ENCODE measurements at regions of chr15 and their contacts with region 1.

Region 1: DNA sequence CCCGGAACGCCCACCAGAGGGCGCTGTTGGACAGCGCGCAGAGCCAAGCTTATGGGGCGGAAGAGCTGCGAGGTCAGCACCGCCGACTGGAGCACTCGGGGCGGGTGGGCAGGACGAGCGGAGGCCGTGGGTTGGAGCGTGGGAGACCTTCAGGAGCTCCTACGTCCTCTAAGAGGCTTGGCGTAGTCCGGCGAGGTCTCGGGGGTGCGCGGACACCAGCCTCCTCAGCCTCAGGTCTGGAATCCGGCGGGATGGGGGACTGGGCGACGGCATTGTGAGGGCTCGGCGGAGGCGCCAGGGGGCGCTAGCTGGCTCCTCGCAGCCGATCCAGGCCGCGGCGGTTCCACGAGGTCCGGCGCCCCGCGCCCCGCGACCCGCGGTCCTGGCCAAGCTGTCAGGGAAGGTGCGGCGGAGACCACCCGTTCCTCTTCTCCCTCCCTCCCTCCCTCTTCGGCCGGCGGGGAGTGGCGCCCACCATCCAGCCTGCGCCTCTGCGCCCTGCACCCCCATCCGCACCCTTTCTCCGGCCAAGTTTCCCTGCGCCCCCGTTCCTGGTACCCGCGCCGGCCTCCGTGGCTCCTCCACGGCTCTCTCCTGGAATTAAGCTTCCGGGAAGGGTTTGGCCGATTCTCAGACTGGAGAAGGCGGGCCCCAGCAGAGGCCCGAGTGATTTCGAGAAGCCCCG is 24.3 kb upstream of the POLG start:
- H3K4me3 ChIP-seq: peak overlapping the region; percentile 55
- H3K27ac ChIP-seq: no peak overlapping the region
- H3K4me1 ChIP-seq: peaks cover 4% of the 10 kb centered on the region; the same call in 1 of the 2 replicates
- CTCF ChIP-seq: peak; percentile 99

Region 2: DNA sequence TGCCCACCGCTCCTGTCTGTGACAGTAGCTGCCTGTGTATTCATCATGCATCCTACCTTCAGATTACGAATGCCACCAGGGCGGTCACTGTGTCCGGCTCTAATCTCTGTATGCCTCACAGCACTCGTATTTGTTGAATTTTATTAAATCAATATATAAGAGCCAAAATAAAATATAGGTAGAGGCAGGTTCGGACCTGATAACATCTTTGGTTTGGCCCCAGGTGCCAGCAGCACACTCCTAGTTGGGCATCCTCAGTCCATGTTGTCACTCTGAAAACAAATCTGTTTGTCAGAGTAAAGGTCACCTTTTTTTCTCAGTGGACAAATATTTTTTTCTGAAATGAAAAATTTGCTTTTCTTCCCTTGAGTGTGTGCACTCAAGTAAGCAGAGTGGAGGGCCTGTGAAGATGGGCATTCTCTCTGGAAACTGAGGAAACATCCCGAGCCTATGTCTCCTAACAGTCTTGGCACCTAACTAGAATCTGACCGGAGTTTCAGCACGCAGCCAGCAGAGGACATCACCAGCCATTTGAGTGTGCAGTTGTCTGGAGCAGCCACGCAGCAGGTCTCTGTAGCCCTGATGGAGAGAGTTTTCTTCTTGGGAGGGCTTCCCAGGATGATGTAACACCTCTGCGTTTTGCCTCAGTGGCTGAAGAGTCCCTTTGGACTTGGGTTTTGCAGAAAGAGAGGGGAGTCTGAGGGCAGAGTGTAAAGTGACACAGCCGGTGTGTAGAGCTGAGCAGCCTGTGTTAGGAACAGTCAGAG is 219.3 kb before region 1 on chr15:
- CTCF ChIA-PET with region 1: no interaction called
- POLR2A ChIA-PET with region 1: no interaction called
- H3K4me3 ChIP-seq: no peak overlapping the region
- H3K27ac ChIP-seq: peak overlapping the region; percentile 53; the same call in 1 of the 2 replicates
- H3K4me1 ChIP-seq: peaks cover 17% of the 10 kb centered on the region
- CTCF ChIP-seq: peak; percentile 64

Region 3: GRCh38 chr15:89187976-89188514 is 170.9 kb before region 1 on chr15:
- CTCF ChIA-PET with region 1: no interaction called
- POLR2A ChIA-PET with region 1: no interaction called
- H3K4me3 ChIP-seq: no peak overlapping the region
- H3K27ac ChIP-seq: no peak overlapping the region
- H3K4me1 ChIP-seq: no peaks in the 10 kb centered on the region
- CTCF ChIP-seq: no peak

Region 4: GRCh38 chr15:89321521-89322410 is 37.1 kb before region 1 on chr15:
- CTCF ChIA-PET with region 1: interaction called, 12 read pairs
- POLR2A ChIA-PET with region 1: no interaction called
- H3K4me3 ChIP-seq: no peak overlapping the region
- H3K27ac ChIP-seq: no peak overlapping the region
- H3K4me1 ChIP-seq: no peaks in the 10 kb centered on the region
- CTCF ChIP-seq: 0 out of 2 replicates have a peak, but pooled peaks have one; percentile 9

Region 5: GRCh38 chr15:89383365-89384175 is 24.7 kb after region 1 on chr15:
- CTCF ChIA-PET with region 1: interaction called, 237 read pairs
- POLR2A ChIA-PET with region 1: interaction called, 4 read pairs
- H3K4me3 ChIP-seq: no peak overlapping the region
- H3K27ac ChIP-seq: peak overlapping the region; percentile 76
- H3K4me1 ChIP-seq: peaks cover 23% of the 10 kb centered on the region
- CTCF ChIP-seq: no peak

Region 6: GRCh38 chr15:89436570-89437316 is 77.8 kb after region 1 on chr15:
- CTCF ChIA-PET with region 1: interaction called, 189 read pairs
- POLR2A ChIA-PET with region 1: no interaction called
- H3K4me3 ChIP-seq: no peak overlapping the region
- H3K27ac ChIP-seq: no peak overlapping the region
- H3K4me1 ChIP-seq: no peaks in the 10 kb centered on the region
- CTCF ChIP-seq: no peak

Region 7: GRCh38 chr15:89462331-89462912 is 103.5 kb after region 1 on chr15:
- CTCF ChIA-PET with region 1: interaction called, 44 read pairs
- POLR2A ChIA-PET with region 1: no interaction called
- H3K4me3 ChIP-seq: no peak overlapping the region
- H3K27ac ChIP-seq: no peak overlapping the region
- H3K4me1 ChIP-seq: no peaks in the 10 kb centered on the region
- CTCF ChIP-seq: no peak

Region 8: GRCh38 chr15:89485855-89486361 is 127.0 kb after region 1 on chr15:
- CTCF ChIA-PET with region 1: interaction called, 25 read pairs
- POLR2A ChIA-PET with region 1: no interaction called
- H3K4me3 ChIP-seq: no peak overlapping the region
- H3K27ac ChIP-seq: no peak overlapping the region
- H3K4me1 ChIP-seq: no peaks in the 10 kb centered on the region
- CTCF ChIP-seq: no peak

Region 9: GRCh38 chr15:89566141-89566540 is 207.2 kb after region 1 on chr15:
- CTCF ChIA-PET with region 1: interaction called, 11 read pairs
- POLR2A ChIA-PET with region 1: no interaction called
- H3K4me3 ChIP-seq: no peak overlapping the region
- H3K27ac ChIP-seq: no peak overlapping the region
- H3K4me1 ChIP-seq: no peaks in the 10 kb centered on the region
- CTCF ChIP-seq: no peak